B cell (primary cell): ENCODE measurements at regions of chr10 and their contacts with region 1.

Region 1: GRCh38 chr10:48802611-48803071 is 118.0 kb downstream of the WDFY4 start:
- DNase-seq: peak; percentile 80
- ATAC-seq: peak; percentile 79
- H3K4me3 ChIP-seq: no peak overlapping the region
- H3K4me3 Mint-ChIP-seq: peak overlapping the region; percentile 81
- H3K27ac ChIP-seq: peak overlapping the region; percentile 45 to 95
- H3K27ac Mint-ChIP-seq: peak overlapping the region; percentile 97
- H3K4me1 ChIP-seq: peaks cover 56 to 63% of the 10 kb centered on the region in 2 donors
- H3K4me1 Mint-ChIP-seq: peaks cover 80% of the 10 kb centered on the region
- H3K27me3 ChIP-seq: no peaks in the 10 kb centered on the region
- H3K27me3 Mint-ChIP-seq: no peaks in the 10 kb centered on the region
- CTCF ChIP-seq: no peak

Region 2: DNA sequence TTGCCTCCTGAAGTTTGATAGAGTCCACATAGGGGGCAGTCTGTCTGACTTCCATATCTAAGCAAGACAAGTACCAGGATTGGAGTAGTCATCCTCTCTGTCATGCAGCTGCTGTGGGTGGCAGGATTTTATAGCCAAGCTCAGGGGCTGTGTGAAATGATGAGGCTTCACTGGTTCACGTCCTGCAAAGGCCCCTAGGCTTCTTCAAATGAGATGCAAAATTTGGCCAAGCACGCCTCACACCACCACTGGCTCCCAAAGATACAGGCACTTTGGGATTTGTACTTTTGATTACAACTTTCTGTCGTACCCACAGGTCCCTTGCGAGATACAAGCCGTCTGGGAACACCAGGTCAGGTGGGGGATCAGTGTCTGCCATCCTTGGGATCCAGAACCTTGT is 50.9 kb before region 1 on chr10:
- CTCF ChIA-PET with region 1: no interaction called
- POLR2A ChIA-PET with region 1: no interaction called
- intact Hi-C with region 1: loop called (anchors 5 kb)
- DNase-seq: no peak
- ATAC-seq: no peak
- H3K4me3 ChIP-seq: no peak overlapping the region
- H3K4me3 Mint-ChIP-seq: no peak overlapping the region
- H3K27ac ChIP-seq: no peak overlapping the region
- H3K27ac Mint-ChIP-seq: peak overlapping the region; percentile 38
- H3K4me1 ChIP-seq: peaks cover 14 to 15% of the 10 kb centered on the region in 2 donors
- H3K4me1 Mint-ChIP-seq: peaks cover 77% of the 10 kb centered on the region
- H3K27me3 ChIP-seq: no peaks in the 10 kb centered on the region
- H3K27me3 Mint-ChIP-seq: no peaks in the 10 kb centered on the region
- CTCF ChIP-seq: no peak

Region 3: GRCh38 chr10:48782386-48782785 is 20.3 kb before region 1 on chr10:
- CTCF ChIA-PET with region 1: no interaction called
- POLR2A ChIA-PET with region 1: no interaction called
- intact Hi-C with region 1: no loop called
- DNase-seq: no peak
- ATAC-seq: no peak
- H3K4me3 ChIP-seq: no peak overlapping the region
- H3K4me3 Mint-ChIP-seq: no peak overlapping the region
- H3K27ac ChIP-seq: peak overlapping the region in 1 of 2 donors; percentile 16
- H3K27ac Mint-ChIP-seq: peak overlapping the region; percentile 21
- H3K4me1 ChIP-seq: no peaks in the 10 kb centered on the region
- H3K4me1 Mint-ChIP-seq: no peaks in the 10 kb centered on the region
- H3K27me3 ChIP-seq: no peaks in the 10 kb centered on the region
- H3K27me3 Mint-ChIP-seq: no peaks in the 10 kb centered on the region
- CTCF ChIP-seq: no peak